ENCODE measurements at regions of chr2 and their contacts with region 1.

Region 1: DNA sequence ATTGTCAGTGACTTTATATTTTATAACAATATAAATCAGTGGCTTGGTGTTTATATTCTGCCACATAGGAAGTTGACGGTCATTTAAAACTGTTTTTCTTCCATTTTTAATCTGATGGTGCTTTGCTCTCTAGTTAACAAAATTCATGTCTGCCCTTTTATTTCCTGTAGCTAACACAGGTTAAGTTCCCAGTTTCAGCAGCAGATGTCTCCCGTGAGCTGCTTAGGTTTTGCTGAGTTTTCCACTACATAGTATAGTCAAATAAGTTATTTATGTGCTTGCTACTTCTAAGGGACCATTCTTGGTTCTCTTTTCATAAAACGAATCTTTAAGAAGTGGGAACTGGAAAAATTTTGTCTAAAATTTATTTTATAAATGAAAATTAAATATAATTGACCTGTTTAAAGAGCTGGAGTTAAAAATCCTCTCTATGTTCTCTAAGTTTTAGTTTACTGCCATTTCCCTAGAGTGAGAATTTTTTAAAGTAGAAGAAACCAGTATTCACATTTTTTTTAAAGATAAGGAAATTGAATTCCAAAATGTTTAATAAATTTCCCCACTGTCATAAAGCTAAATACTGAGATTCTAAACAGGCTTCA is 20.6 kb downstream of the HTR2B start:
- DNase-seq: peak; percentile 41
- H3K4me3 Mint-ChIP-seq: no peak overlapping the region
- H3K27ac Mint-ChIP-seq: peak overlapping the region; percentile 53
- H3K4me1 Mint-ChIP-seq: peaks cover 18% of the 10 kb centered on the region
- H3K27me3 Mint-ChIP-seq: no peaks in the 10 kb centered on the region

Region 2: DNA sequence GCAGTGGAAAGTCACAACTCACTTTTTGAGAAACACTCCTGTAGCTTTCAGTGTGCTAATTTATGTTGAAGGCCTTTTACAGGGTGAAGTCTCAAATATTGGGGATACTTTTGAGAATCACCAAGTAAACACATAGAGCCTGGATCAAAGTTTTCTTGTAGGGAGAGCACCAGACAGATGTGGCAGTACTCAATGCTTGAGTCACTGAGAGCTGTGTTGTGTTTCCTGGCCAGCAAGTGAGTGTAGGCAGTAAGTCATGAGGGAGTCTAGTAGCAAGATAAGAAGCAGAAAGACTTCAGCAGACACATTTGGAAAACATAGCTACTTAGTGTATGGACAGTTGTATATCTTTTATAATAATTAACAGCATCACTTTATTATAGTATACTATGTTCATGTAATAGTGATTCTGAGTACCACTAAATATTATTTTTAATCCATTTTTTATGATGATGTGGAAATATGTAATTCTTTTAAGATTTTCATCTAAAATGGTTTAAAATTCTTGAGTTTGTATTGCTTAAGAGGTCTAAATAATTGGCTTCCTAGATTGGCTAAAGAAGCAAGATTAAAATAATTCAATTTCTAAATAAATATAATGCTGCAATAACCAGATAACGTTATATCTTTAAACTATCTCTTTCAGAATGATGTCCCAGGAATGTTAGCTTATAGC is 34.7 kb before region 1 on chr2:
- intact Hi-C with region 1: no loop called
- DNase-seq: no peak
- H3K4me3 Mint-ChIP-seq: no peak overlapping the region
- H3K27ac Mint-ChIP-seq: peak overlapping the region; percentile 42
- H3K4me1 Mint-ChIP-seq: peaks cover 22% of the 10 kb centered on the region
- H3K27me3 Mint-ChIP-seq: no peaks in the 10 kb centered on the region

Region 3: GRCh38 chr2:231168460-231169139 is 64.4 kb after region 1 on chr2:
- intact Hi-C with region 1: loop called (anchors 5 kb)
- DNase-seq: no peak
- H3K4me3 Mint-ChIP-seq: no peak overlapping the region
- H3K27ac Mint-ChIP-seq: peak overlapping the region; percentile 83
- H3K4me1 Mint-ChIP-seq: peaks cover 26% of the 10 kb centered on the region
- H3K27me3 Mint-ChIP-seq: no peaks in the 10 kb centered on the region

Region 4: DNA sequence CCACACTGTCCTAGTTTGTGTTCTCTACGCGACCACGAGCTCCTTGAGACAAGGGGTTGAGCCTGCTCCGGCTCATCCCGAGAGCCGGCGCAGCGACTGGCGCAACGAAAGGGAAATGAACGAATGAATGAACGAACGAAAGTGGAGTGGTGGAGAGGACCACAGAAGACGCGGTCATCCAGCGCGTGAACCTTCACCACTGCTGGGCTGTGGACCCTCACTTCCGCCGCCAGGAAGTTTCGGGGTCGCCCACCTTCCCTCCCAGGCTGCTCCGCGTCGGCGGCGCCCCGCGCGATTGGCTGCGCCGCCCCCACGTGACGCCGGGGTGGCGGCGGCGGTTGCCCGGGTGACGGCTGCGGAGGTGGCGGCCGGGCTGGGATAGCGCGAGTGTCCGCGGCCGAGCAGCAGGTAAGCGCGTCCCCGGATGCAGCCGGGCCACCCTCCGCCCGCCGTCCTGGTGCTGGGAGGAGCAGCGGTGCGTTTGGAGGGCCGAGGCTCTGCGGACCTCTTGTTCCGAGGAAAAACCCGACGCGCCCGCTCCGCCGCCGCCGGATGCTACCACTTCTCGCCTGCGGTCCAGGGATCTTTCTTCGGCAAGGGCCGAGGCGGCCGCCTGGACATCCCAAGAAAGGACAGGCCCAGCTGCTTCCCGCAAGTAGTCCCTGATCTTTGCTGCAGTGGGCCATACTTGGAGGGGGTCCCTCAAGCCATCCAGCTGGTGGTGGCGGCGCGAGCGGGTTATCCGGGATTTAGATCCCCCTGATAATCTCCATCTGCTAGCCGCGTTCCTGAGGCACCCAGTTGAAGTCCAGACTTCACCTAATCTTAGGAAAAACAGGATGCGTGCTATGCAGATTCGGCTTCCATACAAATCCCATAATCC is 94.3 kb after region 1 on chr2 and contains the start of gene ARMC9:
- intact Hi-C with region 1: loop called (anchors 1 kb)
- DNase-seq: peak; percentile 72
- H3K4me3 Mint-ChIP-seq: peak within 1 kb of the TSS; percentile 89
- H3K27ac Mint-ChIP-seq: peak within 1 kb of the TSS; percentile 22
- H3K4me1 Mint-ChIP-seq: peaks cover 17% of the 10 kb centered on the region
- H3K27me3 Mint-ChIP-seq: peaks cover 18% of the 10 kb centered on the region
- total RNA-seq, gene ARMC9: 2.5 and 3.3 TPM in 2 replicates

Region 5: GRCh38 chr2:231411831-231412617 is 307.8 kb after region 1 on chr2:
- intact Hi-C with region 1: loop called (anchors 5 kb)
- DNase-seq: peak; percentile 43
- H3K4me3 Mint-ChIP-seq: no peak overlapping the region
- H3K27ac Mint-ChIP-seq: no peak overlapping the region
- H3K4me1 Mint-ChIP-seq: peaks cover 3% of the 10 kb centered on the region
- H3K27me3 Mint-ChIP-seq: peaks cover 34% of the 10 kb centered on the region

Region 6: DNA sequence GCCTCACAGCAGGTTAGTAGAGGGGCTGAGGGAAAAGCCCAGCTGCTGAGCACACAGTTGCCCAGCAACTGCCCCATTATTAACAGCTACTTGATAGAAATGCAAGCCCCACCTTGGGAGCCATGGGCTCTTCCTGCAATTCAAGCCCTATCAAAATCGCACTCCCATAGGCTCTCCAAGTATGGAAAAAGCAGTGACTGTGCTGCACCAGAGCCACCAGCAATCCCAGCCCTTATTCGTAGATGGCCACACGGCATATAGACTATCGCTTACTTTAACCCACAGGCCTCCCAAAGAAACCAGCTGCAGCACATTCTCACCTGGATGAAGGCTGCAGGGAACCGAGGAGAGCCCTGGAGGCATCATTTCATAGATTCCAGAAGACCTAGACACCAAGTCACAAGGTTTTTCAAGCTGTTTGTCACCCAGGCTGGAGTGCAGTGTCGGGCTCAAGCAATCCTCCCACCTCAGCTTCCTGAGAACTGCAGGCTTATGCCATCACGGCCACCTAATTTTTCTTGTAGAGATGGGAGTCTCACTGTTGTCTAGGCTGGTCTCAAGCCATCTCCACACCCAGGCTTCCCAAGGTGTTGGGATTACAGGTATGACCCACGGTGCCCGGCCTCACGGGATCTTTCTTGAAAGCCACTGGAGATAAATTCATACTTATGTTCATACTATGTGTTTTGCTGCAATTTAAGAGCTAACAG is 348.7 kb after region 1 on chr2:
- intact Hi-C with region 1: loop called (anchors 5 kb)
- DNase-seq: no peak
- H3K4me3 Mint-ChIP-seq: no peak overlapping the region
- H3K27ac Mint-ChIP-seq: peak overlapping the region; percentile 21
- H3K4me1 Mint-ChIP-seq: peaks cover 5% of the 10 kb centered on the region
- H3K27me3 Mint-ChIP-seq: no peaks in the 10 kb centered on the region

Measured in activated T-helper 2 cell treated with anti-CD3 and anti-CD28 coated beads, Interferon-gamma antibody, Interleukin-2, Interleukin-4, amounts not matched to agents 10 μg/mL and 5 μg/mL and 100 μg/mL, durations not matched to agents 14 hours and 24 hours and 36 hours (primary cell).